ENCODE measurements at regions of chr4 and their contacts with region 1.

Region 1: GRCh38 chr4:80876810-80877209 is 153.7 kb upstream of the BMP3 start:
- DNase-seq: peak; percentile 73
- ATAC-seq: peak; percentile 81
- H3K4me3 ChIP-seq: no peak overlapping the region
- H3K27ac ChIP-seq: peak overlapping the region; percentile 35
- H3K4me1 ChIP-seq: peaks cover 13% of the 10 kb centered on the region
- H3K27me3 ChIP-seq: no peaks in the 10 kb centered on the region
- CTCF ChIP-seq: no peak
- EP300 ChIP-seq: peak; percentile 45 to 85; a peak in 2 of 4 replicates
- POLR2A ChIP-seq: no peak
- RAD21 ChIP-seq: peak; percentile 15; the same call in 1 of the 2 replicates

Region 2: GRCh38 chr4:80610845-80611677 is 265.7 kb before region 1 on chr4:
- CTCF ChIA-PET with region 1: interaction called, 3 read pairs
- POLR2A ChIA-PET with region 1: no interaction called
- RAD21 ChIA-PET with region 1: interaction called, 3 read pairs
- SMC1A ChIA-PET with region 1: interaction called, 6 read pairs
- in situ Hi-C with region 1: no loop called
- intact Hi-C with region 1: loop called (anchors 5 kb)
- DNase-seq: peak; percentile 63
- ATAC-seq: peak; percentile 94
- H3K4me3 ChIP-seq: no peak overlapping the region
- H3K27ac ChIP-seq: no peak overlapping the region
- H3K4me1 ChIP-seq: 0 out of 2 replicates have a peak, but pooled peaks cover 6% of the 10 kb centered on the region
- H3K27me3 ChIP-seq: no peaks in the 10 kb centered on the region
- CTCF ChIP-seq: no peak
- EP300 ChIP-seq: peak; percentile 56 to 65; a peak in 2 of 4 replicates
- POLR2A ChIP-seq: no peak
- RAD21 ChIP-seq: no peak

Region 3: GRCh38 chr4:80831383-80832361 is 45.1 kb before region 1 on chr4:
- CTCF ChIA-PET with region 1: no interaction called
- POLR2A ChIA-PET with region 1: no interaction called
- RAD21 ChIA-PET with region 1: no interaction called
- SMC1A ChIA-PET with region 1: no interaction called
- in situ Hi-C with region 1: no loop called
- intact Hi-C with region 1: no loop called
- DNase-seq: no peak
- ATAC-seq: no peak
- H3K4me3 ChIP-seq: no peak overlapping the region
- H3K27ac ChIP-seq: no peak overlapping the region
- H3K4me1 ChIP-seq: no peaks in the 10 kb centered on the region
- H3K27me3 ChIP-seq: no peaks in the 10 kb centered on the region
- CTCF ChIP-seq: no peak
- EP300 ChIP-seq: no peak
- POLR2A ChIP-seq: no peak
- RAD21 ChIP-seq: no peak

Region 4: GRCh38 chr4:80897537-80898303 is 20.9 kb after region 1 on chr4:
- CTCF ChIA-PET with region 1: interaction called, 3 read pairs
- POLR2A ChIA-PET with region 1: interaction called, 6 read pairs
- RAD21 ChIA-PET with region 1: interaction called, 8 read pairs
- SMC1A ChIA-PET with region 1: interaction called, 38 read pairs
- in situ Hi-C with region 1: no loop called
- intact Hi-C with region 1: no loop called
- DNase-seq: peak; percentile 60
- ATAC-seq: peak; percentile 83
- H3K4me3 ChIP-seq: no peak overlapping the region
- H3K27ac ChIP-seq: 0 out of 2 replicates have a peak overlapping the region, but pooled peaks have one; percentile 1
- H3K4me1 ChIP-seq: peaks cover 7% of the 10 kb centered on the region
- H3K27me3 ChIP-seq: no peaks in the 10 kb centered on the region
- CTCF ChIP-seq: no peak
- EP300 ChIP-seq: no peak
- POLR2A ChIP-seq: no peak
- RAD21 ChIP-seq: no peak

Region 5: DNA sequence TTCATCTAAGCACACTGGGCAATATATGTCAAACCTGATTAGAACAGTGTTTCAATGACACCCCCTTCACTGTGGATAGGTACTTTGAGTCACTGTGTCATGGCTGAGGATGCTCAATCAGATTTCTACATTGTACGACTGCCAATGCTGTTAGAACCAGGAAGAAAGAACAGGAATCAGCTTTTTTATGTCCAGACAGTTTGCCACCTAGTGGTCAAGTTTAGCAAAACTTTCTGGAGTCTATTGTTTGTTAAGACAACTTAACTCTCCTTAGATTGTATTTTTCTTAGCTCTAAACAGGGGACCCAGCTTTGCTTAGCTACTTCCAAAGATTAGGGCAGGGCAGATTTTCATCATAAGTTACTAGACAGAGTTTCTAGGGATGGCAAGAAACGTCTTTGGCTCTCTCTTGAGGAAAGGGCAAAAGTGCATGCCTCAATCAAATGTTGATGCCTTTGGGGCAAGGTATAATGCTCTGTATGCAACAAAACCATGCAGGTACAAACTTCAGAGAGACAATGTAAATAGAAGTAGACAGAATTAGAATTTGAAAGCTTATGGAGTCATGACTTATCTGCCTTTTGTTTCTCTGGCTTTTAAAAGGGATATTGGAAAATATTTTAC is 113.2 kb after region 1 on chr4:
- CTCF ChIA-PET with region 1: interaction called, 5 read pairs
- POLR2A ChIA-PET with region 1: no interaction called
- RAD21 ChIA-PET with region 1: interaction called, 11 read pairs
- SMC1A ChIA-PET with region 1: interaction called, 3 read pairs
- in situ Hi-C with region 1: no loop called
- intact Hi-C with region 1: no loop called
- DNase-seq: peak; percentile 26
- ATAC-seq: peak; percentile 85
- H3K4me3 ChIP-seq: no peak overlapping the region
- H3K27ac ChIP-seq: no peak overlapping the region
- H3K4me1 ChIP-seq: no peaks in the 10 kb centered on the region
- H3K27me3 ChIP-seq: no peaks in the 10 kb centered on the region
- CTCF ChIP-seq: peak; percentile 58 to 68 (median 61)
- EP300 ChIP-seq: no peak
- POLR2A ChIP-seq: no peak
- RAD21 ChIP-seq: peak; percentile 80

Region 6: GRCh38 chr4:81003597-81004111 is 126.8 kb after region 1 on chr4:
- CTCF ChIA-PET with region 1: interaction called, 3 read pairs
- POLR2A ChIA-PET with region 1: no interaction called
- RAD21 ChIA-PET with region 1: interaction called, 7 read pairs
- SMC1A ChIA-PET with region 1: interaction called, 7 read pairs
- in situ Hi-C with region 1: no loop called
- intact Hi-C with region 1: loop called (anchors 5 kb)
- DNase-seq: peak; percentile 75
- ATAC-seq: peak; percentile 98
- H3K4me3 ChIP-seq: no peak overlapping the region
- H3K27ac ChIP-seq: no peak overlapping the region
- H3K4me1 ChIP-seq: peaks cover 6% of the 10 kb centered on the region; the same call in 1 of the 2 replicates
- H3K27me3 ChIP-seq: no peaks in the 10 kb centered on the region
- CTCF ChIP-seq: no peak
- EP300 ChIP-seq: peak; percentile 87 to 96
- POLR2A ChIP-seq: no peak
- RAD21 ChIP-seq: no peak

Region 7: DNA sequence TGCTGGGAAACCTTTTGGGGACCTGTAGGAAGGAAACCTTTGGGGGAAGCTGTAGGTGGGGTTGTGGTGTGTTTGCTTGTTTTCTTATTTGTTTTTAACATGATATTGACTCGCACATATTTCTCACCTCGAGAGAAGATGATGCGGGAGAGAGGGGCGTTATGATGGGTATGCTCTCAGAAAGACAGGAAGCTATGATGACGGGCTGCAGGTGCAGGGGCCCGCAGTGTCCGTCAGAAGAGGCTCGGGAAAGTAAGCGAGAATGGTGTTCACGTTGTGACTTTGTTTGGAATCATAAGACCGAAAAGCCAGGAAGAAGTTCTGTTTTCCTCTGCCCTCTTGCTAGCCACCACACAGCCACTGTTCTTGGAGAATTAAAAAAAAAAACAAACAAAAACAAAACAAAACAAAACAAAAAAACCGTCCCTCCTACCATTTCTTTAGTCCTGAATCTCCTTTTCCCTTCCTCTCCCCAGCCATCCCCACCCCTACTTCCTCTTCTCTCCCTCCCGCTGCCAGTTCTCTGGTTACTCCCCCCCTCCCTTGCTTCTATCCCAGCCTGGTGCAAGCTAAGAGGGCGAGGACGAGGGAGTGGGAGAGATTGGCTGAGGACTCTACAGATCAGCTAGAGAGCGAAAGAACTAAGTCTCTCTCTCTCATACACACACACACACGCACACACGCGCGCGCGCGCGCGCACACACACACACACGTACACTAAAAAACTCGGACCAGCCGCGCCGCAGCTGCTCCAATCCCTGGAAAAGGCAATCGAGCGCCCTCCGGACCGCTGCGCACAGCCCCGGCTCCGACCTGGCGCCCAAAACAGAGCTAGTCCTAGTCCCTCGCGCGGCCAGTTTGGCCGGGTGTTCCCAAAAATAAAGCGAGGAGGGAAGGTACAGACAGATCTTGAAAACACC is 153.5 kb after region 1 on chr4 and contains the start of gene BMP3:
- CTCF ChIA-PET with region 1: no interaction called
- POLR2A ChIA-PET with region 1: no interaction called
- RAD21 ChIA-PET with region 1: no interaction called
- SMC1A ChIA-PET with region 1: interaction called, 7 read pairs
- in situ Hi-C with region 1: no loop called
- intact Hi-C with region 1: loop called (anchors 5 kb)
- DNase-seq: no peak
- ATAC-seq: peak; percentile 61
- H3K4me3 ChIP-seq: peak within 1 kb of the TSS; percentile 65
- H3K27ac ChIP-seq: no peak within 1 kb of the TSS
- H3K4me1 ChIP-seq: no peaks in the 10 kb centered on the region
- H3K27me3 ChIP-seq: peaks cover 6 to 7% of the 10 kb centered on the region in 2 experiments; a peak in 3 of 4 replicates
- CTCF ChIP-seq: no peak
- EP300 ChIP-seq: no peak
- POLR2A ChIP-seq: no peak
- RAD21 ChIP-seq: no peak
- polyA plus RNA-seq, gene BMP3: 0.37 to 1.3 TPM